PC-9 (cell line): ENCODE measurements at regions of chr1 and their contacts with region 1.

Region 1: GRCh38 chr1:169485544-169486278 is at the start of gene SLC19A2:
- DNase-seq: peak; percentile 97 to 98
- H3K4me3 ChIP-seq: peak within 1 kb of the TSS; percentile 85
- H3K27ac ChIP-seq: peak within 1 kb of the TSS; percentile 89
- H3K4me1 ChIP-seq: peaks cover 38% of the 10 kb centered on the region
- H3K27me3 ChIP-seq: no peaks in the 10 kb centered on the region
- CTCF ChIP-seq: no peak; the same call in 1 of the 2 replicates
- total RNA-seq, gene SLC19A2: 3.9 and 4.9 TPM in 2 replicates

Region 2: GRCh38 chr1:169367486-169368405 is 118.0 kb before region 1 on chr1 and contains the starts of genes BLZF1 and NME7:
- CTCF ChIA-PET with region 1: no interaction called
- POLR2A ChIA-PET with region 1: no interaction called
- intact Hi-C with region 1: loop called (anchors 5 kb)
- DNase-seq: peak; percentile 92 to 95
- H3K4me3 ChIP-seq: peak within 1 kb of the TSS; percentile 93
- H3K27ac ChIP-seq: peak within 1 kb of the TSS; percentile 83
- H3K4me1 ChIP-seq: peaks cover 41% of the 10 kb centered on the region
- H3K27me3 ChIP-seq: no peaks in the 10 kb centered on the region
- CTCF ChIP-seq: no peak
- total RNA-seq, gene BLZF1: 14.7 and 15.6 TPM in 2 replicates
- total RNA-seq, gene NME7: 16.5 and 21.4 TPM in 2 replicates

Region 3: DNA sequence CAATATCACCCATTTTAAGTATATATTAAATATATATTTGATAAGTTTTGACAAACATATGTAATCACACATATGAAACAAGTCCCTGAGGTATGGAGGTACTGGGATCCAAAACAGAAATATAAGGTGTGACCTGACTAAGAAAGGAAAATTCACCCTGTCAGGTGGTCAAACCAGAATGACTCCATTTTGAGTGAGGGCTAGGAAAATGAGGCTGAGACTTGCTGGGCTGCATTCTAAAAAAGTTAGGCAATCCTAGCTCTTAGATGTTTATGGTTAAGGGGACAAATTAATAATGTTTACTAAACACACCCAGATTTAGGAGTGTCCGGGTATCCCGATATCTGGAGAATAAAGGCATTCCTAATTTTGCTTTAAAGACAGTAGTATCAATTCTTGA is 11.6 kb after region 1 on chr1:
- CTCF ChIA-PET with region 1: no interaction called
- POLR2A ChIA-PET with region 1: interaction called, 9 read pairs
- intact Hi-C with region 1: loop called (anchors 1 kb)
- DNase-seq: peak; percentile 41 to 89
- H3K4me3 ChIP-seq: peak overlapping the region; percentile 32; the same call in 1 of the 2 replicates
- H3K27ac ChIP-seq: peak overlapping the region; percentile 59
- H3K4me1 ChIP-seq: peaks cover 40% of the 10 kb centered on the region
- H3K27me3 ChIP-seq: no peaks in the 10 kb centered on the region
- CTCF ChIP-seq: no peak

Region 4: DNA sequence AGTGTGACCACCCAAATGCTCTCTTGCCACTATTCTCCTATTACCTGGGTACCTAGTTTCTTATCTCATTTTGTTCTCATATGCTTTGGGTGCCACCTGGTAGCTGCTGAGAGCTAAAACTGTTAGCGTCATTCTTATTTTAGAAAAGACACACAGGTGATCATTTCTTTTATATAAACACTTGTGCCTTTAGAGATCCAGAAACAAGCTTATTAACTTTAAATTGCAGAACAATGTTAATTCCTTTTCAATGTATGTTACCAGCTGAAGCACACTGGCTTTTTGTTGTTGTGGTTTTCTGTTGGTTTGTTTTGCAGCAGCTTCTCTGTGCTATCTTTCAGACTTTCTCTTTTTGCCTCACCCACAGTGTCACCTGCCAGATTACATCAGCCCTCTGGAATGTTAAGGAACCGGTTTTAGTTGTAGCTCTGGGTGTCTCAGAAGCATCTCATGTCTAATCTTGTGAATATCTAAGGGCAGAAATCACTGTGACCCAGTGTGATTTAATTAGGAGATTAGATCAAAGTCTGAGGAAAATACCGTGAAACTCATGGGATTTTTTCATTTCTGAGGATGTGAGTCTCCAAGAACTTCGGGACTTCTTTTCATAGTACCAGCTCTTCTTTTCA is 43.5 kb after region 1 on chr1:
- CTCF ChIA-PET with region 1: no interaction called
- POLR2A ChIA-PET with region 1: interaction called, 5 read pairs
- intact Hi-C with region 1: loop called (anchors 1 kb)
- DNase-seq: peak; percentile 76 to 97
- H3K4me3 ChIP-seq: peak overlapping the region; percentile 41; the same call in 1 of the 2 replicates
- H3K27ac ChIP-seq: peak overlapping the region; percentile 89
- H3K4me1 ChIP-seq: peaks cover 41% of the 10 kb centered on the region
- H3K27me3 ChIP-seq: no peaks in the 10 kb centered on the region
- CTCF ChIP-seq: no peak

Region 5: GRCh38 chr1:169538998-169539871 is 53.5 kb after region 1 on chr1:
- CTCF ChIA-PET with region 1: no interaction called
- POLR2A ChIA-PET with region 1: no interaction called
- intact Hi-C with region 1: loop called (anchors 1 kb)
- DNase-seq: peak; percentile 46 to 84
- H3K4me3 ChIP-seq: no peak overlapping the region
- H3K27ac ChIP-seq: peak overlapping the region; percentile 11; the same call in 1 of the 2 replicates
- H3K4me1 ChIP-seq: peaks cover 18% of the 10 kb centered on the region
- H3K27me3 ChIP-seq: no peaks in the 10 kb centered on the region
- CTCF ChIP-seq: no peak

Region 6: GRCh38 chr1:169546087-169546995 is 60.6 kb after region 1 on chr1:
- CTCF ChIA-PET with region 1: interaction called, 3 read pairs
- POLR2A ChIA-PET with region 1: interaction called, 4 read pairs
- intact Hi-C with region 1: loop called (anchors 1 kb)
- DNase-seq: peak; percentile 44 to 63
- H3K4me3 ChIP-seq: no peak overlapping the region
- H3K27ac ChIP-seq: no peak overlapping the region
- H3K4me1 ChIP-seq: no peaks in the 10 kb centered on the region
- H3K27me3 ChIP-seq: no peaks in the 10 kb centered on the region
- CTCF ChIP-seq: peak; percentile 90

Region 7: GRCh38 chr1:169794530-169795416 is 309.1 kb after region 1 on chr1 and contains the start of gene METTL18:
- CTCF ChIA-PET with region 1: no interaction called
- POLR2A ChIA-PET with region 1: no interaction called
- intact Hi-C with region 1: loop called (anchors 10 kb)
- DNase-seq: peak; percentile 90 to 91
- H3K4me3 ChIP-seq: peak within 1 kb of the TSS; percentile 85
- H3K27ac ChIP-seq: peak within 1 kb of the TSS; percentile 78
- H3K4me1 ChIP-seq: peaks cover 6% of the 10 kb centered on the region; the same call in 1 of the 2 replicates
- H3K27me3 ChIP-seq: no peaks in the 10 kb centered on the region
- CTCF ChIP-seq: no peak
- total RNA-seq, gene METTL18: 7.5 and 11.4 TPM in 2 replicates